ENCODE measurements at regions of chr20 and their contacts with region 1.

Region 1: GRCh38 chr20:62182613-62183425 is at the start of gene MTG2:
- DNase-seq: peak; percentile 98
- H3K4me3 ChIP-seq: peak within 1 kb of the TSS; percentile 73 to 89 (median 84)
- H3K27ac ChIP-seq: peak within 1 kb of the TSS; percentile 92 to 99 (median 97)
- H3K4me1 ChIP-seq: peaks cover 20 to 59% (median 43%) of the 10 kb centered on the region in 6 donors
- H3K27me3 ChIP-seq: no peaks in the 10 kb centered on the region
- CTCF ChIP-seq: peak in 6 of 11 experiments; percentile 22 to 46 (median 30)
- POLR2A ChIP-seq: peak in 1 of 3 donors; percentile 86
- total RNA-seq, gene MTG2: 22.6 to 39.8 (median 37.5) TPM

Region 2: DNA sequence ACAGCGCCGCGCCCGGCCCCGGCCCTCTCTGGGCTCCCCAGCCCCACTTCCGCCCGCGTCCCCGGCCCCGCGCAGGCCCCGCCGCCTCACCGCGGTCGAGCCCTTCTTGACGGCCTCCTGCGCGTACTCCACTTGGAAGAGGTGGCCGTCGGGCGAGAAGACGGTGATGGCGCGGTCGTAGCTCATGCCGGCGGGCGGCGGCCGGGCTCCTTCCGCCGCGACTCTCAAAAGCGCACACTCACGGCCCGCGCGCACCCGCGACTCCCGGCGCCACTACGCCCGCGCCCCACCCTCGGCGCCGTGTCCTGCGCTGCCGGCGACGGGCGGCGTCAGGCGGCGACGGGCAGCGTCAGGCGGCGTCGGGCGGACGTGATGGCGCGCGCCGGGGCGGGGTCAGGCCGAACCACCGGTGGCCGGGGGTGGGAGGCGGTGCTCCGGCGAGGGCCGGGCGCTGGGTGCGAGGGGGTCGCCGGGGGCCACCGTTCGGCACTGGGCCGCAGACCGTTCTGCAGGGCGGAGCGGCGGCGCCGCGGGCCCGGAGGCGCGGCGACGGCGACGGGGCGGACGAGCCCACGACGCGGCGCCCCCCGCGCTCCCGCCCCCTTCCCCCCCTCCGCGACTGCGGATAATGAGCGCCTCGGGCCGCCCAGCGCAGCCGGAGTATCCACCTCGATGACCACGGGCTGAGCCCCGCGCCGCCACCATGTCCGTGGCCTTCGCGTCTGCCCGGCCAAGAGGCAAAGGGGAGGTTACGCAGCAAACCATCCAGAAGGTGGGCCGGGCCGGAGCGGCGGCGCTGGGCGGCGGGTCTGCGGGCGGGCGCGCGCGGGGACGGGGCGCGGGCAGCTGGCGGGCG is 39.5 kb before region 1 on chr20 and contains the starts of genes PSMA7 and SS18L1:
- intact Hi-C with region 1: loop called (anchors 5 kb)
- DNase-seq: peak; percentile 97
- H3K4me3 ChIP-seq: peak within 1 kb of the TSS; percentile 60 to 97 (median 85)
- H3K27ac ChIP-seq: peak within 1 kb of the TSS; percentile 86 to 99 (median 96)
- H3K4me1 ChIP-seq: peaks cover 16 to 75% (median 49%) of the 10 kb centered on the region in 6 donors
- H3K27me3 ChIP-seq: no peaks in the 10 kb centered on the region
- CTCF ChIP-seq: peak in 2 of 11 experiments; percentile 8 to 10
- POLR2A ChIP-seq: peak in 2 of 3 donors; percentile 70 to 87
- total RNA-seq, gene PSMA7: 157 to 247 (median 180) TPM
- total RNA-seq, gene SS18L1: 13.0 to 18.6 (median 14.3) TPM

Region 3: GRCh38 chr20:62246872-62247665 is 64.2 kb after region 1 on chr20:
- intact Hi-C with region 1: loop called (anchors 10 kb)
- DNase-seq: no peak
- H3K4me3 ChIP-seq: no peak overlapping the region
- H3K27ac ChIP-seq: peak overlapping the region in 1 of 8 donors; percentile 1
- H3K4me1 ChIP-seq: peaks cover 12 to 100% (median 75%) of the 10 kb centered on the region in 6 donors
- H3K27me3 ChIP-seq: no peaks in the 10 kb centered on the region
- CTCF ChIP-seq: no peak
- POLR2A ChIP-seq: no peak

Region 4: DNA sequence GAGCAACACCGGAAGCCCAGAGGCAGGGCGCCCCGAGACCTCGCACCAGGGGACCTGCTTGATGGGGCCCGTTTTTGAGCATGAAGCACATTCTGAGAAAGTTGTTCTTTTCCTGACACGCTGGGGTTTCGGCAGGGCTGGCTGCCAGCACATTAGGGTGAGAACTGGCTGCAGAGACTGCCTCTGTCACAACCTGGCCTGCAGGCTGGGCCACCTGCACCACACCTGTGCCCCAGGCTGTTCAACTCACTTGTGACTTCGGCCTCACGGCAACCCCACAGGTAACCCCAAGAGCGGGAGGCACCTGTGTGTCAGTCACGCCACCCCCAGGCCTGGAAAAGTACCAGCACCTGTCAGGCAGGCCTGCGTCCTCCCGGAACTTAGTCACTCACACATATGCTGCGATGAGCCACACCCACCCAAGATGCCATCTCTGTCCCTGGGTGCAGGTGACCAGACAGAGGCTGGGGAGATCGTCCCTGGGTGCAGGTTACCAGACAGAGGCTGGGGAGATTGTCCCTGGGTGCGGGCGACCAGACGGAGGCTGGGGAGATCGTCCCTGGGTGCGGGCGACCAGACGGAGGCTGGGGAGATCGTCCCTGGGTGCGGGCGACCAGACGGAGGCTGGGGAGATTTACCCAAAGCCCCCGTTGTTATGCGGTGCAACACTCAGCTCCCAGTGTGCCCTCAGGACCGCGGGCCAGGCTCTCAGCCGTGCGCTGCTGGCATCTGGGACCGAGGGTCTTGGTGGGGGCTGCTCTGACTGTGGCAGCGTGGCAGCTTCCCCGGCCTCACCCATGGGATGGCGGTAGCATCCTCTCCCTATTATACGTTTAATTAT is 906.5 kb after region 1 on chr20:
- intact Hi-C with region 1: no loop called
- DNase-seq: peak; percentile 67
- H3K4me3 ChIP-seq: no peak overlapping the region
- H3K27ac ChIP-seq: no peak overlapping the region
- H3K4me1 ChIP-seq: no peaks in the 10 kb centered on the region
- H3K27me3 ChIP-seq: peaks cover 0 to 91% (median 26%) of the 10 kb centered on the region in 7 donors
- CTCF ChIP-seq: no peak
- POLR2A ChIP-seq: no peak